KBM-7 (cell line): ENCODE measurements at regions of chr14 and their contacts with region 1.

Region 1: GRCh38 chr14:75126679-75127473 is at the start of gene NEK9:
- DNase-seq: peak; percentile 91

Region 2: GRCh38 chr14:74739293-74740030 is 387.4 kb before region 1 on chr14:
- in situ Hi-C with region 1: no loop called
- DNase-seq: no peak

Region 3: GRCh38 chr14:75487155-75487671 is 360.3 kb after region 1 on chr14:
- in situ Hi-C with region 1: loop called (anchors 25 kb)
- DNase-seq: no peak